Left cardiac atrium (tissue), 4 donors: ENCODE measurements at regions of chr1 and their contacts with region 1.

Region 1: DNA sequence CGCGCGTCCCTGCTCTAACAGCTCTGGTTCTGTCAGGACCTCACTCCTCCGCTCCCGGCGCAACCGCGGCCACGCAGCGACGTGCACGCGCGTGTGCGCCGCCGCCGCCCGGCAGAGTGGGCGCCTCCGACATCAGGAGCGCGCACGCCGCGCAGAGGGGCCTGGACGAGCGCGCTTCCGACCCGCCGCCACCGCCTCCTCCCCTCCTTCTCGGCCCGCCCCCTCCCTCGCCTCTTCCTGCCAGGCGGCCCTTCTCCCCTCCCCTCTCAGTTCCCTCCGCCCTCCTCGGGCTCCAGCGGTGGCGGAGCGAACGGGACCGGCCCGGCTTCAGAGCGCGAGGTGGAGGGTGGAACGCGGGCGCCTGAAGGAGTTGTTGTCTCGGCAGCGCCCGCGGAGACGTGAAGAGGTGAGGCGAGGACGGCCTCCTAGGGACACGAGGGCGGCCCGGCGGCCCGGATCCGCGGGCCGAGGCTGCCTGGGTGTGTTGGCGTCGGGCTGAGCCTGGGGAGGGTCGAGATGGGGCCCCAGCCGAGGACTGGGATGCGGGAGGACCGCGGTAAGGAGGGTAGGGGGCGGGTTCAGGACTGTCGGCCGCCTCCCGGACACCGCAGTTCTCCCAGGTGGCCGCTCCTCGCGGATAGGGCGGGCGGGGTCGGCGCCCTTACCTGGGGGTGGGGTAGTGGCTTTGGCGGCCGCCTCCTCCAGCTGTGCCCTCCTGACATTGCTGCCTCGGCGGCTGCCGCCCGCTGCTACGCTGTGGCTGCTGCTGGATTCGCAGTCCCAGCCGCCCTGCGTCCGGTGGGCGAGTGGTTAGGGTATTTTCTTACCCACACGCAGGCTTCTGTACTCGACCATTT is at the start of gene RABGAP1L:
- DNase-seq: peak; percentile 95
- ATAC-seq: peak; percentile 97 to 99
- total RNA-seq, gene RABGAP1L: 134 to 145 TPM

Region 2: DNA sequence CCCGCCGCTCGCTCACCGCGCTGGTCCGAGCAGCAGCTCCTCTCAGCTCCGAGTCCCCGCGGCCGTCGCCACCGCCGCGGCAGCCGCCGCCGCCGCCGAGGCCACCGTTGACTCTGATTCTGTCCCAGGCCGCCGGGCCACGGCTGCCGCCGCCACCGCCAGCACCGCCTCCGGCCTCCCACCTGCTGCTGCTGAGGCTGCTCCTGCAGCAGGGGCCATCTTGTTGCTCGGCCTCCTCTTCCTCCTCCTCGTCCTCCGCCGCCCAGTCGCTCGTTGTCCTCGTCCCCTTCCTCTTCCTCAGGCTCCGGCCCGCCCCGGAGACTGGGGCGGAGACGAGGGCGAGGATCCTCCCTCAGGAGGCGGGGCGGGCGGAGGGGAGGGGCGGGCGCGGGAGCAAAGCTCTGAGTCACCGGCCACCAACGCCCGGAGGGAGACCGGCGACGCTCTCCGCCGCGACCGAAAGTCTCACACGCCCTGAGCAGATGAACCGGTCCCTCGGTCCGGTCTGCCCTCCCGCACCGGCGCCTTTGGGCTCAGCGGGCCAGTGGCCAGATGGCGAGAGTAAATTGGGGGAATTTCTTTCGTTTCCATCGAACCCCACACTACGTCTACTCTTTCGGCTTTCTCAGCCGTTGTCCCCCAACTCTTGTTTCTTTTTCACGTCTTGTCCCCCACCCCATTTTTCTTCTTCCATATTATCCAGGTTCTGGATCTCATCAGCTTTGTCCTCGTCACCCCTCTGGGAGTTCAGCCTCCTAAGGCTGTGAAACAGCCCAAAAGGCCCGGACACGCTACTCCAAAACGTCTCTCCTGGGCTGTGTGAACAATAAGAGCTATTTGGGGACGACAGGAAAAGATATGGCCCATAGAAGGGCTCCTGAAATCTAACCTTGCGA is 137.2 kb before region 1 on chr1 and contains the start of gene RC3H1:
- intact Hi-C with region 1: loop called in 1 of 2 experiments (anchors 5 kb)
- DNase-seq: peak; percentile 91
- ATAC-seq: peak; percentile 98 to 99
- total RNA-seq, gene RC3H1: 21.1 to 21.9 TPM

Region 3: DNA sequence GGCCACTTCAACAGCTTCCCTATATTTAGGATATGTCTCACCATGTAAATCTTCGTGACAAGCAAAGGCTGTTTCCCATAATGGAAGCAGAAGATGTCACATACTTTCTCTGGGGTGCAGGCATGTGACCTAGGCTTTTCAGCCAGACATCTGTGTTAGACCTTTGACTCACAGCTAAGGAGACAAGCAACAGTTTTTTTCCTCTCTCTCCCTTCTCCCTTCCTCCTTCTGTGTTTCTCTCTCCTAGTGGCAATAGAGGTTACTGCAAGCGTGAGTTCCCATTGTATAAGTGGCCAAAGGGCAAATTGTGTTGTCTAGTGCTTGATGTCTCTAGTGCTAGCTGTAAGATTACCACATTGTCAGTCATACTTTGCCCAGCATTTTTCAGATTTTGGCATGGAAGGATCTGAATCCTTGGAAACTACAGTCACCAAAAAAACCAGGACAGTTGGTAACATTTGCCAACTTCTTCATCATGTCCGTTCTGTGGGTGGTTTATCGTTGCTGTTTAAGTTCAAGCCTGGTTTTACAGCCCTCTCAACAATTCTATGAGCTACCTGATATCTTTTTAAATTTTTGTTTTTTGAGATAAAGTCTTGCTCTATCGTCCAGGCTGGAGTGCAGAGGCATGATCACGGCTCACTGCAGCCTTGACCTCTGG is 44.6 kb before region 1 on chr1:
- intact Hi-C with region 1: loop called in 1 of 2 experiments (anchors 5 kb)
- DNase-seq: no peak
- ATAC-seq: peak; percentile 40 to 81

Region 4: GRCh38 chr1:174217787-174218574 is 58.5 kb after region 1 on chr1:
- intact Hi-C with region 1: loop called in 1 of 2 experiments (anchors 5 kb)
- DNase-seq: no peak
- ATAC-seq: peak; percentile 51 to 61